HEK293 (cell line): ENCODE measurements at regions of chr1 and their contacts with region 1.

Region 1: GRCh38 chr1:202235856-202236837 is 42.5 kb downstream of the LGR6 start:
- H3K4me3 ChIP-seq: peak overlapping the region; percentile 1; the same call in 1 of the 2 replicates
- H3K27ac ChIP-seq: no peak overlapping the region; the same call in 1 of the 2 replicates
- H3K4me1 ChIP-seq: peaks cover 5% of the 10 kb centered on the region; the same call in 1 of the 2 replicates
- CTCF ChIP-seq: peak; percentile 74

Region 2: DNA sequence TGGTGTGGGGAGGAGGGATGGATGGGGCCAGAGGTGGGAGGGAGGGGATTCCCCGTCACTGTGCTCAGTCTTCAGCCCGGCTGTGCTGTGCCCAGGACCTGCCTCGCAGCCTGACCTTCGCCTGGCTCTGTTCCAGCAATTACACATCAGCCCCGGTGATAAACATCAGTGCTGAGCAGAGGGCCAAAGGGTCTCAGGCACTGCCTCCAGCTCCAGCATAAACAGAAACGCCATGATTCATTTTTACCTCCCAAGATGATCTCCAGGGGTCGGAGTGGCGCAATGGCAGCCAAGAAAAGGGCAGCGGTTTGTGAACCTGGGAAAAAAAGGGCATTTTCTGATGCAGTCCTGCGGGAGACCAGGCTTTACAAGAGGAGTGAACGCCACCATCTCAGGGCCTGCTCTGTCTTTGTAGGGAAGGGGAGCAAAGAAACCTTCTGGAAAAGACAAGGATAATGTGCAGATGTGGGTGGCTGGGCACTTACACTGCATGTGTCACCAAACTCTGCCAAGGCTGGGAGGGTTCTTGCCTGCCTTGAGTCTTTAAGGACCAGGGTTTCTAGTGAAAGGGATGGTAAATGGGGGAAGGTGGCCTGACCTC is 319.4 kb before region 1 on chr1:
- CTCF ChIA-PET with region 1: no interaction called
- POLR2A ChIA-PET with region 1: no interaction called
- H3K4me3 ChIP-seq: no peak overlapping the region
- H3K27ac ChIP-seq: no peak overlapping the region
- H3K4me1 ChIP-seq: no peaks in the 10 kb centered on the region
- CTCF ChIP-seq: no peak

Region 3: GRCh38 chr1:202200112-202200566 is 36.0 kb before region 1 on chr1:
- CTCF ChIA-PET with region 1: interaction called, 35 read pairs
- POLR2A ChIA-PET with region 1: no interaction called
- H3K4me3 ChIP-seq: no peak overlapping the region
- H3K27ac ChIP-seq: no peak overlapping the region
- H3K4me1 ChIP-seq: no peaks in the 10 kb centered on the region
- CTCF ChIP-seq: no peak

Region 4: DNA sequence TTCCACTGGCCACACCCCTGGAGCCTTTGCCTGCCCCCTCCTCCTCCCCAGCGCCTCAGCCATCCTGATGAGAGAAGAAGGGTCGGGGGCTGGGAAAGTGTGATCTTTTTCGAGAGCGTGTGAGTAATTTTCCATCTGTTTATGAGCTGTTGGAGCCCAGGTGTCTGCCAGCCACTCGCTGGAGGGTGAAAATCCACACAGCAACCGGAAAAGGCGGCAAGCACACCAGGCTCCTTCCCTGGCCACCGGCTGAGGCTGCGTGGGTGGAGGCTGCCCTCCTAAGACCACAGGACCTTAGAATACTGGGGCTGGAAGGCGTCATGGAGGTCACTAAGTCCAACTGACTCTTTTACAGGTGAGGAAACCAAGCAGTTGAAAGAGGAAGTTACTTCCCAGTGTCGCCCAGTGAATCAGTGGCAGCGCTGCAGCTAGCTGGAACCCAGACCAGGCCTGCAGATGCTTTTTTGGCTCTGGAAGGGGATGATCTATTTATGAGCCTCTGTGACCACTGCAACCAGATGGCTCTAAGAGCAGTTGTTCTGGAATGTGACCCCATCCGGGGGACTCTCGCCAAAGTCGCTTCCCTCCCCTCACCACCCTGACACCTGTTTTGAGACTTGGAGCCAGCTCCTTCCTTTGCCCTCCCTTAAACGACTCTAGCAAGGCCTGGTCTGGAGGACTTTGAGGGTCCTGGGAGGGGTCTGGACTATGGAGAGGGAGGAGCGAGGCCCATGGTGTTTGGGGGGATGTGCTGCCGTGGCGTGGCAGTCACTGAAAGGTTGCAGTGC is 11.9 kb after region 1 on chr1:
- CTCF ChIA-PET with region 1: interaction called, 11 read pairs
- POLR2A ChIA-PET with region 1: no interaction called
- H3K4me3 ChIP-seq: no peak overlapping the region
- H3K27ac ChIP-seq: no peak overlapping the region
- H3K4me1 ChIP-seq: no peaks in the 10 kb centered on the region
- CTCF ChIP-seq: no peak

Region 5: DNA sequence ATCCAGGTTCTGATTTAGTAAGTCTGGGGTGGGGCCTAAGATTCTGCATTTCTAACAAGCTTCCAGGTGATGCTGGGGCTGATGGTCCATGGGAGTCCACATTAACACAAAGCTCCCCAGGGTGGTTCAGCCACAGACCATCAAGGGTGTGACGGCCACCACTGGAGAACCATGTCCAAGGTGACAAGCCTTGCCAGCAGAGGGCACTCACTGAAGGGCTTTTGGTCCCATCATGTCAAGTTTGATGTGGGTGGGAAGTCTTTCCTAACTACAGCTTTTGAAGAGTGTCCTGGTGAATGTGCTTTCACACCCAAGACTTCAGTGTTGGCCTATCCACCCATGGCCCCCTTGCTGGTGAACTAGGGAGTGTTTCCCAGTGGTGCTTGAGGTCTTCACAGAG is 38.5 kb after region 1 on chr1:
- CTCF ChIA-PET with region 1: interaction called, 10 read pairs
- POLR2A ChIA-PET with region 1: no interaction called
- H3K4me3 ChIP-seq: no peak overlapping the region
- H3K27ac ChIP-seq: no peak overlapping the region
- H3K4me1 ChIP-seq: no peaks in the 10 kb centered on the region
- CTCF ChIP-seq: peak; percentile 32; the same call in 1 of the 2 replicates

Region 6: GRCh38 chr1:202283379-202283844 is 47.3 kb after region 1 on chr1:
- CTCF ChIA-PET with region 1: interaction called, 14 read pairs
- POLR2A ChIA-PET with region 1: interaction called, 7 read pairs
- H3K4me3 ChIP-seq: no peak overlapping the region
- H3K27ac ChIP-seq: no peak overlapping the region
- H3K4me1 ChIP-seq: peaks cover 17% of the 10 kb centered on the region
- CTCF ChIP-seq: no peak

Region 7: DNA sequence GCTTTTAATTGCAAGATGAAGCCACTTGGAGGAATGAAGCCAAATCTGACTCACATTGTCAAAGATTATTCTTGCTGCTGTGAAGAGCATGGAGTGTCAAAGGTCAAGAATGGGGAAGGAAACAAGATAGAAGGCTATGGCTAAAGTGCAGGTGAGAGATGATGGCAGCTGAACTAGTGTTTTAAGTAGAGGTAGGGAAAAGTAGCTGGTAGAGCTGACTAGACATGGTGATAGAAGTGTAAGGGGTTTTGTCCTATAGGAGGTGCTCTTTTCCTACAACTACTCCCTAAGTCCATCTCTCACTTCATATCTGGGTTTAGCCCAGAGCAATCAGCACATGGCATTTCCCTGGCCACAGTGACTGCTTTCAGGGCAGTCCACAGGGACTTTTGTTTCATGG is 93.7 kb after region 1 on chr1:
- CTCF ChIA-PET with region 1: interaction called, 11 read pairs
- POLR2A ChIA-PET with region 1: no interaction called
- H3K4me3 ChIP-seq: no peak overlapping the region
- H3K27ac ChIP-seq: no peak overlapping the region
- H3K4me1 ChIP-seq: no peaks in the 10 kb centered on the region
- CTCF ChIP-seq: no peak